A549 (cell line): ENCODE measurements at regions of chr6 and their contacts with region 1.

Region 1: GRCh38 chr6:116010790-116011401 is 49.8 kb downstream of the FRK start:
- DNase-seq: peak in 1 of 2 experiments; percentile 69
- ATAC-seq: peak; percentile 80 to 82; a peak in 5 of 6 replicates
- H3K4me3 ChIP-seq: no peak overlapping the region
- H3K27ac ChIP-seq: peak overlapping the region; percentile 21 to 66; a peak in 1 of 6 replicates
- H3K4me1 ChIP-seq: peaks cover 77% of the 10 kb centered on the region
- CTCF ChIP-seq: peak; percentile 80
- EP300 ChIP-seq: no peak
- POLR2A ChIP-seq: no peak
- RAD21 ChIP-seq: peak; percentile 81 to 89

Region 2: GRCh38 chr6:116060572-116061283 is 49.8 kb after region 1 on chr6 and contains the start of gene FRK:
- CTCF ChIA-PET with region 1: interaction called, 20 read pairs
- POLR2A ChIA-PET with region 1: interaction called, 6 read pairs
- DNase-seq: peak; percentile 32 to 87
- ATAC-seq: peak; percentile 91 to 95
- H3K4me3 ChIP-seq: peak within 1 kb of the TSS; percentile 72
- H3K27ac ChIP-seq: peak within 1 kb of the TSS; percentile 84 to 92
- H3K4me1 ChIP-seq: peaks cover 20% of the 10 kb centered on the region
- CTCF ChIP-seq: peak; percentile 29; the same call in 2 of the 3 replicates
- EP300 ChIP-seq: no peak
- POLR2A ChIP-seq: peak; percentile 35; the same call in 1 of the 2 replicates
- RAD21 ChIP-seq: 0 out of 5 replicates have a peak, but pooled peaks of 1 of the 2 experiments have one; percentile 15
- polyA plus RNA-seq, gene FRK: 6.7 and 8.9 TPM in 2 replicates

Region 3: DNA sequence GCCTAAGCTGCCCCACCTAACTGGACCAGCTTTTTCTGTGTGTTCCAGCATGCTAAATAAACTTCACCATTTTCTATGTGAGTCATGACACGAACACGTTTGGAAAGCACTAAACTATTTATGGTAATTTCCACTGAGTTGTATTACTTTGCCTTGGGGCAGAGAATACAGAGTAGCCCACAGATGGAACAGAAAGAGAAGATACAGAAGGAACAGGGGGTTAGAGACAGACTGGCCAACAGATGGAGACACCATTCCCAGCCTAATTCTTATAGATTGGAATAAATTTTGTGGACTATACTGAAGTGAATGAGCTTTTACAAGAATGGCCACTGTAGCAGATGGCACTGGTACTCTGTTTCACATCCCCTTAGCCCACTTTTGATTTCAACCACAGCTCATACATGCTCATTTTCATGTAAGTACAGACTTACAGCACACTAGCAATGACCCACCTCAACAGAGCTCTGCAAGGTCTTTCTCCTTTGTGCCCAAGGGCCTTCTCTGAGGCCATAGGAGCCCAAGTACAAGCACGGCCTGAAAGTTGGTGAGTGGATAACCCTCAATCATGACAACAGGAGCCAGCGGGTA is 76.6 kb after region 1 on chr6:
- CTCF ChIA-PET with region 1: interaction called, 11 read pairs
- POLR2A ChIA-PET with region 1: no interaction called
- DNase-seq: no peak
- ATAC-seq: peak; percentile 41 to 59; a peak in 3 of 6 replicates
- H3K4me3 ChIP-seq: no peak overlapping the region
- H3K27ac ChIP-seq: 0 out of 6 replicates have a peak overlapping the region, but pooled peaks of 1 of the 2 experiments have one; percentile 21
- H3K4me1 ChIP-seq: peaks cover 11% of the 10 kb centered on the region; the same call in 1 of the 3 replicates
- CTCF ChIP-seq: no peak
- EP300 ChIP-seq: no peak
- POLR2A ChIP-seq: no peak
- RAD21 ChIP-seq: no peak